Vagina (tissue), 2 donors: ENCODE measurements at regions of chr20 and their contacts with region 1.

Region 1: GRCh38 chr20:58209652-58210397 is 18.6 kb downstream of the ANKRD60 start:
- DNase-seq: no peak
- H3K4me3 ChIP-seq: no peak overlapping the region
- H3K27ac ChIP-seq: no peak overlapping the region
- H3K4me1 ChIP-seq: no peaks in the 10 kb centered on the region
- H3K27me3 ChIP-seq: no peaks in the 10 kb centered on the region
- CTCF ChIP-seq: peak; percentile 100
- POLR2A ChIP-seq: no peak

Region 2: DNA sequence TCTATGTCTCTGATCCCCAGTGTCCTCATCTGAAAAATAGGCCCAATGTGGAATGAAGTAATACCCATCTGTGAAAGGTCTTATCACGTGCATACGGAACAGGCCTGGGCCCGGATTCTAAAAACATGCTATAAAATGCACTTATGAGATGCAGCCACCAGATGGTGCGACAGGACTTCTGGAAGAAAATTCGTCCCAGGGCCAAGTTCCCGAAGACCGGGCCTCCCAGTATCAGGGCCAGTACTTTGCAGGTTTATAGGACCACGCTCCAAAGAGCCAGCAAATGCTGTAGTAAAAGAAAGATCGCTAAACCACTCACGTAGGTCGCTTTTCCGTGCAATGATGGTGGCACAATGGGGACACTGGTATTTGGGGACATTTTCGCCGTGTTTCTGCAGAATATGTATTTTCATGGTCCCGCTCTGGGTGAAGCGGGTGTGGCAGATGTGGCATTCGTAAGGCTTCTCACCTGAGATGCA is 695.5 kb before region 1 on chr20:
- intact Hi-C with region 1: loop called (anchors 10 kb)
- DNase-seq: no peak
- H3K4me3 ChIP-seq: no peak overlapping the region
- H3K27ac ChIP-seq: no peak overlapping the region
- H3K4me1 ChIP-seq: no peaks in the 10 kb centered on the region
- H3K27me3 ChIP-seq: no peaks in the 10 kb centered on the region
- CTCF ChIP-seq: peak; percentile 82 to 92 (median 87)
- POLR2A ChIP-seq: no peak